Transverse colon (tissue), 4 donors: ENCODE measurements at regions of chr3 and their contacts with region 1.

Region 1: GRCh38 chr3:48400824-48401433 is 28.9 kb downstream of the FBXW12 start:
- DNase-seq: peak; percentile 68
- H3K4me3 ChIP-seq: no peak overlapping the region
- H3K27ac ChIP-seq: peak overlapping the region; percentile 74 to 88 (median 82)
- H3K4me1 ChIP-seq: peaks cover 3 to 16% (median 7%) of the 10 kb centered on the region in 4 donors
- H3K27me3 ChIP-seq: no peaks in the 10 kb centered on the region
- CTCF ChIP-seq: peak; percentile 81 to 94 (median 83)
- EP300 ChIP-seq: no peak
- POLR2A ChIP-seq: no peak

Region 2: DNA sequence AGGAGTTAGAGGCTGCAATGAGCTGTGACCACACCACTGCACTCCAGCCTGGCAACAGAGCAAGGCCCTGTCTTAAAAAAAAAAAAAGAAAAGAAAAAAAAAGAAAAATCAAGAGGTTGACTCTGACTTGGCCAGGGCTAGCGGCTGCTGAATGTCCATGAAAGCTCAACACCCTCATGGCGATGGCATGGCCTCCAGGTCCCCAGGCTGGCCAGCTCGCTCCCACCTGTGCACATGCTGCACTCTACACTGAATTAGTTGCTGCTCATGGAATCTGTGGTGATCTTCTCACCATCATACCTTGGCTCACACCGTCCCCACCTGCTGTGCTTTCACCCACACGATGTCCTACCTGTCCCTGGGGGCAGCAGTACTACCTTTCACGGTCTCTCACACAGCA is 201.0 kb before region 1 on chr3:
- in situ Hi-C with region 1: no loop called
- intact Hi-C with region 1: no loop called
- DNase-seq: no peak
- H3K4me3 ChIP-seq: no peak overlapping the region
- H3K27ac ChIP-seq: no peak overlapping the region
- H3K4me1 ChIP-seq: no peaks in the 10 kb centered on the region
- H3K27me3 ChIP-seq: no peaks in the 10 kb centered on the region
- CTCF ChIP-seq: no peak
- EP300 ChIP-seq: no peak
- POLR2A ChIP-seq: no peak

Region 3: GRCh38 chr3:48273594-48274211 is 127.2 kb before region 1 on chr3:
- in situ Hi-C with region 1: loop called in 1 of 4 experiments (anchors 10 kb)
- intact Hi-C with region 1: no loop called
- DNase-seq: peak; percentile 55
- H3K4me3 ChIP-seq: no peak overlapping the region
- H3K27ac ChIP-seq: no peak overlapping the region
- H3K4me1 ChIP-seq: peaks cover 0 to 10% (median 4%) of the 10 kb centered on the region in 4 donors
- H3K27me3 ChIP-seq: no peaks in the 10 kb centered on the region
- CTCF ChIP-seq: peak; percentile 68 to 80 (median 77)
- EP300 ChIP-seq: no peak
- POLR2A ChIP-seq: no peak

Region 4: GRCh38 chr3:48429960-48430707 is 29.2 kb after region 1 on chr3 and contains the start of gene PLXNB1:
- in situ Hi-C with region 1: loop called in 2 of 4 experiments (anchors 5 kb)
- intact Hi-C with region 1: loop called (anchors 2 kb)
- DNase-seq: peak; percentile 84
- H3K4me3 ChIP-seq: peak within 1 kb of the TSS; percentile 56 to 83 (median 69)
- H3K27ac ChIP-seq: peak within 1 kb of the TSS; percentile 90 to 97 (median 92)
- H3K4me1 ChIP-seq: peaks cover 38 to 70% (median 62%) of the 10 kb centered on the region in 4 donors
- H3K27me3 ChIP-seq: no peaks in the 10 kb centered on the region
- CTCF ChIP-seq: no peak
- EP300 ChIP-seq: no peak
- POLR2A ChIP-seq: peak; percentile 61
- total RNA-seq, gene PLXNB1: 129 to 530 (median 245) TPM

Region 5: DNA sequence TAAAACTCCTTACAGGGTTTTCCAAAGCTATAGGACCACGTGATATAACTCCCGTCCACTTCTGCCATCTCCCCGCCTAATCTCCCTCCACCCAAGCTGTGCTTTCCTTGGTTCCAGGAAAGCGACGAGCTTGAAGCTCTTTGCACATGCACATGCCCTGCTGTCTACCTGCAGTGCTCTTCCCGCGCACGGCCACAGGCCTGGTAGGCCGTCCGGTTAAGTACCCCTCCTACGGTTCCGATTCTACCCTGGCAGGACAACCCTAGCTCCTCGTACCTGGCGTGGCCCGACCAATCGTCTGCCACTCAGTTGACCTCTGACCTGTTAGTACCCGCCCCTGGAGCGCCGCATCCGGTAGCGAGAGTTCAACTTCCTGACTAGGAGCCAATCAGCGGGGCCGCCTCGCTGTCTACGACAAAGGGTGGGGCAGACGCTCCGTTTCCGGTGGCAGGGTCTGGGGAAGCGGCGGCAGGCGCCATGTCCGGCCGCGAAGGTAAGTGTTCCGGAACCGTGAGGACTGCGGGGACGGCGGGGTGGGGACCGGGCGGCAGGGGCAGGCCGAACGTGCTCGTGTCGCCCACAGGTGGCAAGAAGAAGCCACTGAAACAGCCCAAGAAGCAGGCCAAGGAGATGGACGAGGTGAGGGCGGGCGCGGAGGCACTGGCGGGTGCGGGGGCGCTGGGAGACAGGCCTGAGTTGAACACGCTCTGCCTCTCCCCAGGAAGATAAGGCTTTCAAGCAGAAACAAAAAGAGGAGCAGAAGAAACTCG is 39.1 kb after region 1 on chr3 and contains the starts of genes CCDC51 and TMA7:
- in situ Hi-C with region 1: loop called in 2 of 4 experiments (anchors 5 kb)
- intact Hi-C with region 1: loop called (anchors 2 kb)
- DNase-seq: peak; percentile 99
- H3K4me3 ChIP-seq: peak within 1 kb of the TSS; percentile 81 to 98 (median 92)
- H3K27ac ChIP-seq: peak within 1 kb of the TSS; percentile 93 to 99 (median 96)
- H3K4me1 ChIP-seq: peaks cover 18 to 33% (median 22%) of the 10 kb centered on the region in 4 donors
- H3K27me3 ChIP-seq: no peaks in the 10 kb centered on the region
- CTCF ChIP-seq: no peak
- EP300 ChIP-seq: no peak
- POLR2A ChIP-seq: peak; percentile 99
- total RNA-seq, gene CCDC51: 2.8 to 14.1 (median 8.2) TPM
- total RNA-seq, gene TMA7: 115 to 279 (median 192) TPM

Region 6: DNA sequence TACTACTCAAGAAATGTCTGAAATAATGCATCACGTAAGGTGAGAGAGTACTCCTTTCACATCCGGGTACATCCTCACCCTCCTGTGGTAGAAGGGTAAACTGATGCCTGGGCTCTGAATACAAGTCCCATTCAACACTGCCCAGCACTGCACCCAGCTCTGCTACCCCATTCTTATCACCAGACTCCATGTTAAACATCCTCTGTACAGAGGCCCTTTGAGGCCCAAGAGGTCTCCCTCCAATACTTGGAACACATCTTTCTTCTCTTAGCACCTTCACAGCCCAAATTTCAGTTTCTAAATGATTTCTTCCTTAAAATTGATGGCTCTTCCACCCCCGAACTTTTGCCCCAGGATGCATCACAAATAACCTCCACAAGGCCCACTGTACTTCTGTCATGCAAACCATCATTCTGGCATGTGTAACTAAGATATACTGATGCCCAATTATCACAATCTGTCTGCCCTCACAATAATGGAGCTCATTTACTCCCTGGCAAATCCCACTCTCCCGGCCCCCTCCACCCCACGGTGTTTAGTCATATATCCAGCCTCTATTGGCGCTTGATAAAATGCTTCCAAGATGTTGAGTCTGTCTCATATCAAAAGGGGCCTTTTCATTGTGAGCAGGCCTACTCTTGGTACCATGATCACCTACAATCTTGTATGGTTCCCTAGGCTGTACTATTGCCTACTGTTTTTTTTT is 969.8 kb after region 1 on chr3:
- in situ Hi-C with region 1: no loop called
- intact Hi-C with region 1: no loop called
- DNase-seq: no peak
- H3K4me3 ChIP-seq: no peak overlapping the region
- H3K27ac ChIP-seq: no peak overlapping the region
- H3K4me1 ChIP-seq: peaks cover 0 to 7% (median 1%) of the 10 kb centered on the region in 4 donors
- H3K27me3 ChIP-seq: no peaks in the 10 kb centered on the region
- CTCF ChIP-seq: no peak
- EP300 ChIP-seq: no peak
- POLR2A ChIP-seq: no peak